ENCODE measurements at regions of chr3 and their contacts with region 1.

Region 1: DNA sequence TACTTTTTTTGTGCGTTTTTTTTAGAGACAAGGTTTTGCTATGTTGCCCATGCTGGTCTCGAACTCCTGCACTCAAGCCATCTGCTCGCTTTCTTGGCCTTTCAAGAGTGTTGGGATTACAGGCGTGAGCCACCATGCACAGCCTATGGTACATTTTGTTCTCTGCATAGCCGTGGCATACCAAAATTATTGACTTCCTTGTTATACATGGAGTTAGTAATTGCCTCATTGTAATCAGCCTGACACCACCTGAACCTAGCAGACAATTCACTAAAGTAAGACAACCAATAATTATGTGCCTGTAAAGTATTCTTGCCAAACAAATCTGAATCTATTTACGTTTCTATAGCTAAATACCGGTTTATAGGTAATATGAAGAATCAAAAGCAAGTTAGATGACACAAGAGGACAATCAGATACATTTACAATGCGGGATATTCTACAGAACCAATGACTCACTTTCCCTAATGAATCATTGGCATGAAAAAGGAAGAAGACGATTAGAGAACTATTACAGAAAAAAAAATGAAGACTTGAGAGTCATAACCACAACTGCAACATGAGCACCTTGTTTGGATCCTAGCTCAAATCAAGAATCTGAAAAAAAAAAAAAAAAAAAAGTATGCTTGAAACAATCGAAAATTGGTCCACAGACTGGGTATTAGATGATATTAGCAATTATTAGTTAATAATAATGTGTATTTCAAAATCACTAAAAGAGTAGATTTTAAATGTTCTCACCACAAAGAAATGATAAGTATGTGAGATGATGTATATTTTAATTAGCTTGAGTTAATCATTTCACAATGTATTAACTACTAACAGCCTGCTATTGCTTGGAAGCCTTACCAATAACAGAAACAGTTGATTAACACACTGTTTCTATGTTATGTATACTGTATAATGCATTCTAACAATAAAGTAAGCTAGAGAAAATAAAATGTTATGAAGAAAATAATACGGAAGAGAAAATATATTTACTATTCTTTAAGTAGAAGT is 7.1 kb downstream of the GUCA1C start:
- DNase-seq: no peak
- H3K4me3 ChIP-seq: no peak overlapping the region
- H3K4me3 Mint-ChIP-seq: no peak overlapping the region
- H3K27ac Mint-ChIP-seq: no peak overlapping the region
- H3K4me1 ChIP-seq: peaks cover 20% of the 10 kb centered on the region
- H3K4me1 Mint-ChIP-seq: peaks cover 20% of the 10 kb centered on the region
- H3K27me3 ChIP-seq: no peaks in the 10 kb centered on the region
- H3K27me3 Mint-ChIP-seq: no peaks in the 10 kb centered on the region
- CTCF ChIP-seq: no peak

Region 2: GRCh38 chr3:108931035-108931434 is 15.6 kb before region 1 on chr3:
- CTCF ChIA-PET with region 1: no interaction called
- POLR2A ChIA-PET with region 1: no interaction called
- intact Hi-C with region 1: loop called (anchors 2 kb)
- DNase-seq: no peak
- H3K4me3 ChIP-seq: no peak overlapping the region
- H3K4me3 Mint-ChIP-seq: no peak overlapping the region
- H3K27ac Mint-ChIP-seq: no peak overlapping the region
- H3K4me1 ChIP-seq: no peaks in the 10 kb centered on the region
- H3K4me1 Mint-ChIP-seq: no peaks in the 10 kb centered on the region
- H3K27me3 ChIP-seq: no peaks in the 10 kb centered on the region
- H3K27me3 Mint-ChIP-seq: no peaks in the 10 kb centered on the region
- CTCF ChIP-seq: no peak

Measured in Caco-2 (cell line).